RWPE1 (cell line): ENCODE measurements at regions of chr15 and their contacts with region 1.

Region 1: DNA sequence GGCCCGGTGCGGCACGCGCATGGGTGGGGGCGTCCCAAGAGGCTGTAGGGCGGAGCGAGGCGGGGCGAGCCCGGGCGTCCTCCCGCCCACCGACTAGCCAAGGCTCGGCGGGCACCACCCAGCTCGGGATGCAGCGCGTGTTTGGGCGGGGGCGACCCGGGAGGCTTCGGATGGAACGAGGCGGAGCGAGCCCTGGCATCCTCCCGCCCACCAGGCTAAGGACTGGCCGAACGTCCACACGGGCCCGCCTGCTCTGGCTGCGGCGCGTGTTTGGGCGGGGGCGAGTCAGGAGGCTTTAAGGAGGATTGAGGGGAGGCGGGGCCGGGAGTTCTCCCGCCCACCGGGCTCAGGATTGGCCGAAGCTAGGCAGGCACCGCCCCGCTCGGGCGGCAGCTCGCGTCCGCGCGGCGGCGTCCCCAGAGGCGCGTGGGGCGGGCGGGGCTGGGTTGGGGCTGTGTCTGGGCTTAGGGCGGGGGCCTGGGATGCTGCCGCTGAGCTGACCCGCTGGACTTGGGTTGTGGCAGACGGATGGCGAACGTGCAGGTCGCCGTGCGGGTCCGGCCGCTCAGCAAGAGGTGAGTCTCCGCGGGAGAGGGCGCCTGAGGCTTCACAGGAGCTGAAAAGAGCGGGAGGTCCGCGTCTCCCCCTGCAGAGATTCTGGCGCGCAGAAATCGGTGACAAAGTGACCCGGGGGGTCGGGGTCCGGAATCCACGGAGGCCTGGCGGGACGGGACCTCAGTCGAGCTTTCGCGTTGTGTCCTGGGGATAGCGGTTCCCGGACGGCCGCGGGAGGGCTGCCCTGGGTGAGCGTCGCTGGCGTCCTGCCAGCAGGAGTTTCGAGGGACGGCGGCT is at the start of gene STARD9:
- DNase-seq: peak; percentile 99
- H3K27ac ChIP-seq: peak within 1 kb of the TSS; percentile 74
- CTCF ChIP-seq: no peak

Region 2: GRCh38 chr15:42359986-42360385 is 215.4 kb before region 1 on chr15:
- CTCF ChIA-PET with region 1: no interaction called
- POLR2A ChIA-PET with region 1: no interaction called
- DNase-seq: no peak
- H3K27ac ChIP-seq: no peak overlapping the region
- CTCF ChIP-seq: no peak

Region 3: GRCh38 chr15:42373274-42373673 is 202.1 kb before region 1 on chr15:
- CTCF ChIA-PET with region 1: no interaction called
- POLR2A ChIA-PET with region 1: interaction called, 13 read pairs
- DNase-seq: no peak
- H3K27ac ChIP-seq: no peak overlapping the region
- CTCF ChIP-seq: no peak